PC-3 (cell line): ENCODE measurements at regions of chr17 and their contacts with region 1.

Region 1: GRCh38 chr17:69723742-69724141 is 309.2 kb downstream of the MAP2K6 start:
- DNase-seq: peak; percentile 50
- ATAC-seq: peak; percentile 72
- H3K4me3 ChIP-seq: no peak overlapping the region
- H3K27ac ChIP-seq: no peak overlapping the region
- H3K4me1 ChIP-seq: no peaks in the 10 kb centered on the region
- H3K27me3 ChIP-seq: no peaks in the 10 kb centered on the region
- CTCF ChIP-seq: peak; percentile 60

Region 2: GRCh38 chr17:69402052-69402451 is 321.7 kb before region 1 on chr17:
- CTCF ChIA-PET with region 1: no interaction called
- POLR2A ChIA-PET with region 1: no interaction called
- intact Hi-C with region 1: no loop called
- DNase-seq: peak; percentile 98
- ATAC-seq: peak; percentile 99
- H3K4me3 ChIP-seq: peak overlapping the region; percentile 50; the same call in 1 of the 2 replicates
- H3K27ac ChIP-seq: peak overlapping the region; percentile 93
- H3K4me1 ChIP-seq: peaks cover 39% of the 10 kb centered on the region
- H3K27me3 ChIP-seq: no peaks in the 10 kb centered on the region
- CTCF ChIP-seq: no peak

Region 3: DNA sequence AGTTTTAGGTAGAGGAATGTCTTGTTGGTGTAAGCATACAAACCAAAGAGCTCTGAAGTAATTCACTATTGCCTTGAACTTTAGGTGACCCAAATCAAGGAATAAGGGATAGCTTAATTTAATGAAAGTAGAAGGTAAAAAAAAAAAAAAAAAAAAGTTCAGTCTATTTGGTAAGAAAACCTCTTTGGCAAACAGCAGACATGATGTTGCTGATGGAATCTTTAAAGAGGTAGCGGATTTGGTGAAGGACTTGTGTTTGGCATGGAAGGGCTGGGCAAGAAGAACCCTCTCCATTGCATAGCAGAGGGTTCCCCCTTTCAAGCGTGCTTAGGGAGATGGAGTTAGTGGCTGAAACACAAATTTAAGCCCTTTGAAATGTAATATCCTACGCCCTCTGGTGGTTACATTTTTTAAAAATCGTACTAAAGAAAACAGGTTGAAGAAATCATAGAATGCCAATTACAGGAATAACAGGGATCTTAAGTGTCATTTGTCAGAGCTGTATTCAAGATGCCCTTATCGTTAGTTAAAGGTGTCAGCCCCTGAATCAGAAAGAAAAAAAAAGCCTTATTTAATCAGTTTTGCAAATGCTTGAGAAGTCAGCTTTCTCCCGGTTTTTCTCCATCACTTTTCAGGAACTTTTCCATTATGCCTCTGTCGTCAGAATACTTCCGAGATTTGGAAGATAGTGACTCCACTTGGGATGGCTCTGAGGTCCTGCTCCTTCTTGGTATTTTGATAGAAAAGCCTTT is 828.7 kb after region 1 on chr17:
- CTCF ChIA-PET with region 1: interaction called, 10 read pairs
- POLR2A ChIA-PET with region 1: no interaction called
- intact Hi-C with region 1: no loop called
- DNase-seq: peak; percentile 80
- ATAC-seq: peak; percentile 78
- H3K4me3 ChIP-seq: no peak overlapping the region
- H3K27ac ChIP-seq: no peak overlapping the region
- H3K4me1 ChIP-seq: no peaks in the 10 kb centered on the region
- H3K27me3 ChIP-seq: no peaks in the 10 kb centered on the region
- CTCF ChIP-seq: peak; percentile 81